PC-9 (cell line): ENCODE measurements at regions of chr7 and their contacts with region 1.

Region 1: DNA sequence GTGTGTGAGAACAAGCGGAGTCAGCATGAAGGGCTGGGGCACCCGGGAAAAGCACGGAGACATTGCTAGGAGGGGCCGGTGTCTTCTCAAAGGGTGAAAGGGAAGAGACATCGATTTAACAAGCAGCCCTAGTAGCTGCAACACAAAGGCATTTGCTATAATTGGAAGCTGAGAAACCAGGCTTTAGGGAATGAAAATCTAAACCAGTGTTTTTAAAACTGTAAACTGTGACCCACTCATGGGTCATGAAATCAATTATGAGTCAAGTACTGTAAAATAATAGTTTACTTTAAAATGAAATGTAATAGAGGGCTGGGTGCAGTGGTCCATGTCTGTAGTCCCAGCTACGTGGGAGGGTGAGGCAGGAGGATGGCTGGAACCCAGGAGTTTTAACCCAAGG is 128.7 kb upstream of the RHEB start:
- DNase-seq: no peak
- H3K4me3 ChIP-seq: no peak overlapping the region
- H3K27ac ChIP-seq: no peak overlapping the region
- H3K4me1 ChIP-seq: peaks cover 19% of the 10 kb centered on the region
- H3K27me3 ChIP-seq: no peaks in the 10 kb centered on the region
- CTCF ChIP-seq: no peak

Region 2: DNA sequence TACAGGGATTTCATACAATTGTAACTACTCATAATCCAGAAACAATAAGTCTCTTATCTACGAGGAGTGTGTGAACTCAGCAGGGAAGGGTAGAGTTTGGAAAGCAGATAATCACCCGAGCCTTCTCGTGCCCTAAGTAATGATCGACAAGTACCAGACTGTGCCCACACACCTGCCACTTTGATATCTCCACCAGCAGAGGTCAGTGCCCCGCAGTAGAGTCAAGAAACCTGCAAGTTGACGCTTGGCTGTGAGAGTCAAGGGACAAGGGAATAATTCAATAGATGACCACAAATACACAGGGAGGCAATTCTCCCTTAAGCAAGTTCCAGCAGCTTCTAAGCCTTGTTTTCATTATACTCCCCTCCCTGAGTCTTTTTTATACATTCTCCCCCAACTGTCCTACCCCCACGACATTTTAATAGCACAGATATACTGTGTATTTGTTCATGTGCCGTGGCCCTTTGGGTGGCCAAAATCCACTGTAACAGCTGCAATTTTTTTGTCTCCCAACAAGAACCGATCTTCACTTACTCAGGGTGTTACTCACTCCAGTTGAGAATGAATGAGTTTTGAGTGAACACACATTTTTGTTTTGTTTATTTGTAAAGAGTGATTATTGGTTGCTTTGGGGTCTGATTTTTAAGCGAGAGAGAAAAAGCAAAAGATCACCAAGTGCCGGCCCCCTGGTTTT is 21.9 kb before region 1 on chr7:
- CTCF ChIA-PET with region 1: interaction called, 5 read pairs
- POLR2A ChIA-PET with region 1: interaction called, 19 read pairs
- intact Hi-C with region 1: no loop called
- DNase-seq: peak; percentile 37 to 55
- H3K4me3 ChIP-seq: no peak overlapping the region
- H3K27ac ChIP-seq: no peak overlapping the region
- H3K4me1 ChIP-seq: peaks cover 16% of the 10 kb centered on the region
- H3K27me3 ChIP-seq: no peaks in the 10 kb centered on the region
- CTCF ChIP-seq: peak; percentile 65

Region 3: DNA sequence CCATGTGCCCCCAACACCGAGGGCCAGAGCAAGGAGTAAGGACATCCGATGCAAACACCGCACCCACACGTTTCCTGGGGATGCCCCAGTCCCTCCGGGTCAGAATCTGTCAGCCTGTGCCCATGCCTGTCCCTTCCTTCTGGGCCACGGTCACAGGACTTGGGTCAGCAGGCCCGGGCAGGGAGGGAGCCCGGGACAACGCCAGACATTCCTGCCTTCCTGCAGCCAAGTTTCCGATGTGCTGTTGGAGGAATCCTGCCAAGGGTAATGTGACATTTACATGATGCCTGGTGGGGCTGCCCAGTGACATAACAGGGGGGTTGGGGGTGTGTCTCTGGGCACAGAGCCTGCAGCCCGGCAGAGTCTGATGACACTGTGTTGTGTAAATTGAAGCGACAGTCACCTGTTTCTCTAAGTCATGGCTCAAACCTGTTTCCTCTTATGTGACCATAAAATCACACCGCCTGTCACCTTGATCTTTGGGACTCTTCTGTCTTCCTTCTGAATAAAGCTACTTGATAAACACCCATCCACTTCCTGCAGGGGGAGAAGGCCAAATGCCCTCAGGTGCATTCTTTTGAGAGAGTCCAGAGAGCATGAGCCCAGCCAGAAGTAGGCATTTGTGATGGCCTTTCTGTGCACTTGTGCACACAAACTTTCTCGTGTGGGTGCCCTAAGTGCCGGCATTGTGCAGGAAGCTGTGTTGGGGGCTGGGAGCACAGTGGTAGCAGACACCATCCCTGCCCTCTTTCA is 46.6 kb after region 1 on chr7:
- CTCF ChIA-PET with region 1: no interaction called
- POLR2A ChIA-PET with region 1: no interaction called
- intact Hi-C with region 1: loop called (anchors 2 kb)
- DNase-seq: peak; percentile 76 to 97
- H3K4me3 ChIP-seq: no peak overlapping the region
- H3K27ac ChIP-seq: peak overlapping the region; percentile 54
- H3K4me1 ChIP-seq: peaks cover 65% of the 10 kb centered on the region
- H3K27me3 ChIP-seq: no peaks in the 10 kb centered on the region
- CTCF ChIP-seq: no peak